ENCODE measurements at regions of chr20 and their contacts with region 1.

Region 1: GRCh38 chr20:10812759-10813327 is 139.0 kb upstream of the JAG1 start:
- DNase-seq: no peak
- H3K4me3 ChIP-seq: no peak overlapping the region
- H3K27ac ChIP-seq: no peak overlapping the region
- H3K4me1 ChIP-seq: peaks cover 14% of the 10 kb centered on the region
- H3K27me3 ChIP-seq: no peaks in the 10 kb centered on the region
- CTCF ChIP-seq: no peak
- POLR2A ChIP-seq: no peak

Region 2: DNA sequence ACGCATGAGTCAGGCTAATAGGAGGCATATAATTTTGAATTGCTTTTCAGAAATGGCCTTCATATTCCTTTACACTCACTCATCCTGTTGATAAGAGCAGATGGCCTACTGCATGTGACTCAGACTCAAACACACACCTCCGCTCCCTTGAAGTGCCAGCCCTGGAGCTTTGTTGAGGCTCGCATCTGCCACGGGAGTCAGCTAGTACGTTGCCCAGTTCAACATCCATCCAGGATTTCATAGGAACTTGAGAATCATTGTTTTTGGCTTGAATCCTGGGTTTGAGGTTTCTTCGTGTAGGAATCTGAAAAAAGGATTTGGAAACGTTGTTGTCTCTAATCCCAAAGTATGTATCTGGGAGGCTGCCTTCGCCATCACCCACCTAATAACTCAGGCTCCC is 51.6 kb before region 1 on chr20:
- intact Hi-C with region 1: loop called (anchors 10 kb)
- DNase-seq: no peak
- H3K4me3 ChIP-seq: no peak overlapping the region
- H3K27ac ChIP-seq: no peak overlapping the region
- H3K4me1 ChIP-seq: no peaks in the 10 kb centered on the region
- H3K27me3 ChIP-seq: no peaks in the 10 kb centered on the region
- CTCF ChIP-seq: no peak
- POLR2A ChIP-seq: no peak

Region 3: GRCh38 chr20:10961651-10962288 is 148.9 kb after region 1 on chr20:
- intact Hi-C with region 1: no loop called
- DNase-seq: no peak
- H3K4me3 ChIP-seq: no peak overlapping the region
- H3K27ac ChIP-seq: no peak overlapping the region
- H3K4me1 ChIP-seq: no peaks in the 10 kb centered on the region
- H3K27me3 ChIP-seq: no peaks in the 10 kb centered on the region
- CTCF ChIP-seq: no peak
- POLR2A ChIP-seq: no peak

Measured in vagina (tissue), 2 donors.